ENCODE measurements at regions of chr10 and their contacts with region 1.

Region 1: DNA sequence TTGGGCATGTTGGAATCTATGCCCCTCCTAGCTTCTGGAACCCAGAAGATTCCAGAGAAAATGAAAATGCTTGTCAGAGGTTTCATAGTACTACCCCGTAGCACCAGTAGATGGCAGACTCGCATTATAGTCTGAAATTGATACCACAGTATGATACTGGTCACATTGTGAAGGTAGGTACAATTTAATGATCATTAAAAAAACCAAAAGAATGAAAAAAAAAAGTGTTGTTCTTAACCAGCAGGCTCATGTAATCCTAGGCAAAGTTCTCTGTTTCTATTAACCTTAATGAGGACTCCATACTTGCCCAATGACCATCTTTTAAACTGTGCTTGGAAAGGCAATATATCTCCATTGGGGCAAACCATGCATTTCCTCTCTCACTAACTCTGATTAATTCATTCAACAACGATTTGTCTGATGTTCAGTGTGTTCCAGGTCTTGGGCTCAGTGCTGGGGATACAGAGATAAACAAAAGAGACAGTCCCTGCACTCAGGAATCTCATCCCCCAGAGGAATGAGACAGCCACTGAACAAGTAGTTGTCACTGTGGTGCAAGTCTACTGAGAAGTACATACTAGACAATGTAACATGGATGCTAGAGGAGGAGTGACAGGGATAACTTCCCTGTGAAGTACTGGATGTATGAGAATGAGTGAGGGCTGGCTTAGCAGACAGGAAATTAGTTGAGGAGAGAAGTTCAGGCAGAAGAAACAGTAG is 223.5 kb upstream of the PHYHIPL start:
- DNase-seq: peak; percentile 67 to 84
- H3K4me3 ChIP-seq: no peak overlapping the region
- H3K4me3 Mint-ChIP-seq: no peak overlapping the region
- H3K27ac Mint-ChIP-seq: peak overlapping the region; percentile 24
- H3K4me1 ChIP-seq: peaks cover 22% of the 10 kb centered on the region
- H3K4me1 Mint-ChIP-seq: peaks cover 23% of the 10 kb centered on the region
- H3K27me3 ChIP-seq: no peaks in the 10 kb centered on the region
- H3K27me3 Mint-ChIP-seq: no peaks in the 10 kb centered on the region
- CTCF ChIP-seq: peak; percentile 92 to 97

Region 2: GRCh38 chr10:58531084-58531695 is 421.7 kb before region 1 on chr10:
- CTCF ChIA-PET with region 1: interaction called, 5 read pairs
- POLR2A ChIA-PET with region 1: no interaction called
- intact Hi-C with region 1: loop called (anchors 1 kb)
- DNase-seq: peak; percentile 82 to 93
- H3K4me3 ChIP-seq: no peak overlapping the region
- H3K4me3 Mint-ChIP-seq: no peak overlapping the region
- H3K27ac Mint-ChIP-seq: peak overlapping the region; percentile 15
- H3K4me1 ChIP-seq: peaks cover 8% of the 10 kb centered on the region; the same call in 1 of the 2 replicates
- H3K4me1 Mint-ChIP-seq: peaks cover 28% of the 10 kb centered on the region
- H3K27me3 ChIP-seq: no peaks in the 10 kb centered on the region
- H3K27me3 Mint-ChIP-seq: no peaks in the 10 kb centered on the region
- CTCF ChIP-seq: peak; percentile 92 to 97

Region 3: DNA sequence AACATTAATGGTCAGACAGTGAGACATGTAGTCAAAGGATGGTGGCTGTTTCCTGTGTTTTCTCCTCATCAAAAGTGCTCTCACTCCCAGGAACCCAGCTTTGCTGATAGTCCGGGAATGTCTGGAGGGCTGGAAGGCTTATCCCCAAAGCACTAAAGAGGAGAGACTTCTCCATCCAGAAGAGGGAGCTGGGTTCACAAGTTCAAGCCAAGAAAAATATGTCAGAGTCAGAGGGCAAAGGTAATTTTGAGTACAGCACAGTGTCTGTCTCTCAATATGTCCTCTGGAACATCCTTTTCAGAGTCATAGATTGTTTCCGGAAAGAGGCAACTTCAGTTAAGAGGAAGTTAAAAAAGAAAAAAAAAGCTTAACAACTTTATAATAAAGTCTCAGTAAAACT is 58.0 kb before region 1 on chr10:
- CTCF ChIA-PET with region 1: no interaction called
- POLR2A ChIA-PET with region 1: no interaction called
- intact Hi-C with region 1: loop called (anchors 2 kb)
- DNase-seq: peak; percentile 64 to 68
- H3K4me3 ChIP-seq: no peak overlapping the region
- H3K4me3 Mint-ChIP-seq: no peak overlapping the region
- H3K27ac Mint-ChIP-seq: peak overlapping the region; percentile 40
- H3K4me1 ChIP-seq: peaks cover 27% of the 10 kb centered on the region
- H3K4me1 Mint-ChIP-seq: peaks cover 13% of the 10 kb centered on the region
- H3K27me3 ChIP-seq: no peaks in the 10 kb centered on the region
- H3K27me3 Mint-ChIP-seq: no peaks in the 10 kb centered on the region
- CTCF ChIP-seq: peak in 1 of 2 experiments; percentile 59

Region 4: GRCh38 chr10:59027975-59028655 is 75.2 kb after region 1 on chr10:
- CTCF ChIA-PET with region 1: no interaction called
- POLR2A ChIA-PET with region 1: no interaction called
- intact Hi-C with region 1: no loop called
- DNase-seq: no peak
- H3K4me3 ChIP-seq: no peak overlapping the region
- H3K4me3 Mint-ChIP-seq: no peak overlapping the region
- H3K27ac Mint-ChIP-seq: no peak overlapping the region
- H3K4me1 ChIP-seq: no peaks in the 10 kb centered on the region; the same call in 1 of the 2 replicates
- H3K4me1 Mint-ChIP-seq: peaks cover 9% of the 10 kb centered on the region
- H3K27me3 ChIP-seq: no peaks in the 10 kb centered on the region
- H3K27me3 Mint-ChIP-seq: no peaks in the 10 kb centered on the region
- CTCF ChIP-seq: no peak

Region 5: GRCh38 chr10:59126261-59126660 is 173.4 kb after region 1 on chr10:
- CTCF ChIA-PET with region 1: no interaction called
- POLR2A ChIA-PET with region 1: no interaction called
- intact Hi-C with region 1: loop called (anchors 1 kb)
- DNase-seq: no peak
- H3K4me3 ChIP-seq: no peak overlapping the region
- H3K4me3 Mint-ChIP-seq: no peak overlapping the region
- H3K27ac Mint-ChIP-seq: peak overlapping the region; percentile 86
- H3K4me1 ChIP-seq: peaks cover 33% of the 10 kb centered on the region
- H3K4me1 Mint-ChIP-seq: peaks cover 21% of the 10 kb centered on the region
- H3K27me3 ChIP-seq: no peaks in the 10 kb centered on the region
- H3K27me3 Mint-ChIP-seq: no peaks in the 10 kb centered on the region
- CTCF ChIP-seq: no peak

Region 6: DNA sequence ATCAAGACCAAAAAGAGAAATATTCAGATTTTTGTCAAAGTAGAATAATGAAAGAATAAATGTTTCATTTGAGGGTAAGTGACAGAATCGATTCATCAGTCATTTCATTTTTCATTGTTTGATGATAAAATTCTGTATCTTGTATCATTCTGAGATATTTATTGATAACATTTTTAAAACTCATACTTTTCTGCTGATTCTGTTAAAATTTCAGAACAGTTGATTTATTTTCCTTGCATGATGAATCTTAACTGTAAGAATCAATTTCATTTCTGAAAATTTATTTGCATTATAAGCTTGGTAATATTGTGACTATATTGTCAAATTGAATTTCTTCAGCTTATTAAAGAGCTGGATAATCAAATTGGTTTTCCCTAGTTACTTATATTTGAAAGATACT is 237.4 kb after region 1 on chr10:
- CTCF ChIA-PET with region 1: no interaction called
- POLR2A ChIA-PET with region 1: no interaction called
- intact Hi-C with region 1: no loop called
- DNase-seq: no peak
- H3K4me3 ChIP-seq: no peak overlapping the region
- H3K4me3 Mint-ChIP-seq: no peak overlapping the region
- H3K27ac Mint-ChIP-seq: no peak overlapping the region
- H3K4me1 ChIP-seq: 0 out of 2 replicates have a peak, but pooled peaks cover 4% of the 10 kb centered on the region
- H3K4me1 Mint-ChIP-seq: peaks cover 14% of the 10 kb centered on the region
- H3K27me3 ChIP-seq: no peaks in the 10 kb centered on the region
- H3K27me3 Mint-ChIP-seq: no peaks in the 10 kb centered on the region
- CTCF ChIP-seq: no peak

Region 7: DNA sequence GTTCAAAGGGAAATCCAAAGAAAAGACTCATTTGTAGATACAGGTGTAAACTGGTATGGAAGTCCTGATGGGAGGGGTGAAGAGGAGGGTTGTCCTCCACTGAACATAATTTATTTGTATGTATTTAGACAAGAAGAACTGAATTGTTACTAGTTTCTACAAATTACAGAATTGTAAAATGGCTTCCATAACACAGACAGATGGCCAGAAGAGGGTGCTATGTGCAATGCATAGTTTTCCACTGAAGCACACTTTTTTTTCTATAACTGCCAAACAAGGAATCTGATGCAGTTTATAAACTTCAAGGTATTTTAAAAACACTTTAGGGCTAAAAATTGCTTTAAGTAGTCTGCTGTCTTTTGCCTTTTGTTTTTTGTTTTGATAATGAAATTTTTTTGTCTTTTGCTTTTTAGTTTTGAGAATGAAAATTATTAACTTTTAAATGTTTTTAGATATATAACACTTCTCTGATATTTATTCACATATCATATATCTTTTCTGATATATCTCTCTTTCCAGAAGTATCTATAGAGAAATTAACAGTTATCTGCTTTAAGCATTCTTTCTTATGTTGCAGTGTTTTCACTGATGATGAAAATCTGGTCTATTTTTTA is 282.0 kb after region 1 on chr10:
- CTCF ChIA-PET with region 1: interaction called, 7 read pairs
- POLR2A ChIA-PET with region 1: no interaction called
- intact Hi-C with region 1: loop called (anchors 1 kb)
- DNase-seq: peak; percentile 36 to 67
- H3K4me3 ChIP-seq: no peak overlapping the region
- H3K4me3 Mint-ChIP-seq: no peak overlapping the region
- H3K27ac Mint-ChIP-seq: no peak overlapping the region
- H3K4me1 ChIP-seq: no peaks in the 10 kb centered on the region
- H3K4me1 Mint-ChIP-seq: peaks cover 15% of the 10 kb centered on the region
- H3K27me3 ChIP-seq: no peaks in the 10 kb centered on the region
- H3K27me3 Mint-ChIP-seq: no peaks in the 10 kb centered on the region
- CTCF ChIP-seq: peak; percentile 82 to 89

Region 8: GRCh38 chr10:59625721-59626522 is 673.0 kb after region 1 on chr10:
- CTCF ChIA-PET with region 1: interaction called, 3 read pairs
- POLR2A ChIA-PET with region 1: no interaction called
- intact Hi-C with region 1: loop called (anchors 1 kb)
- DNase-seq: peak; percentile 77 to 86
- H3K4me3 ChIP-seq: no peak overlapping the region
- H3K4me3 Mint-ChIP-seq: no peak overlapping the region
- H3K27ac Mint-ChIP-seq: no peak overlapping the region
- H3K4me1 ChIP-seq: peaks cover 3% of the 10 kb centered on the region; the same call in 1 of the 2 replicates
- H3K4me1 Mint-ChIP-seq: peaks cover 6% of the 10 kb centered on the region
- H3K27me3 ChIP-seq: no peaks in the 10 kb centered on the region
- H3K27me3 Mint-ChIP-seq: peaks cover 3% of the 10 kb centered on the region
- CTCF ChIP-seq: peak; percentile 95 to 97